ENCODE measurements at regions of chr12 and their contacts with region 1.

Region 1: GRCh38 chr12:102169922-102170621 is 27.6 kb downstream of the PMCH start:
- DNase-seq: peak; percentile 36
- ATAC-seq: peak; percentile 21
- H3K4me3 ChIP-seq: no peak overlapping the region
- H3K4me3 Mint-ChIP-seq: no peak overlapping the region
- H3K27ac ChIP-seq: no peak overlapping the region
- H3K27ac Mint-ChIP-seq: no peak overlapping the region
- H3K4me1 ChIP-seq: no peaks in the 10 kb centered on the region
- H3K4me1 Mint-ChIP-seq: no peaks in the 10 kb centered on the region
- H3K27me3 ChIP-seq: no peaks in the 10 kb centered on the region
- H3K27me3 Mint-ChIP-seq: no peaks in the 10 kb centered on the region
- CTCF ChIP-seq: peak; percentile 75

Region 2: GRCh38 chr12:102702447-102703114 is 532.5 kb after region 1 on chr12:
- CTCF ChIA-PET with region 1: interaction called, 6 read pairs
- POLR2A ChIA-PET with region 1: no interaction called
- intact Hi-C with region 1: loop called (anchors 2 kb)
- DNase-seq: peak; percentile 73
- ATAC-seq: peak; percentile 33
- H3K4me3 ChIP-seq: no peak overlapping the region
- H3K4me3 Mint-ChIP-seq: no peak overlapping the region
- H3K27ac ChIP-seq: no peak overlapping the region
- H3K27ac Mint-ChIP-seq: no peak overlapping the region
- H3K4me1 ChIP-seq: no peaks in the 10 kb centered on the region
- H3K4me1 Mint-ChIP-seq: no peaks in the 10 kb centered on the region
- H3K27me3 ChIP-seq: peaks cover 0 to 4% (median 0%) of the 10 kb centered on the region in 4 experiments
- H3K27me3 Mint-ChIP-seq: peaks cover 15% of the 10 kb centered on the region
- CTCF ChIP-seq: peak; percentile 79

Region 3: DNA sequence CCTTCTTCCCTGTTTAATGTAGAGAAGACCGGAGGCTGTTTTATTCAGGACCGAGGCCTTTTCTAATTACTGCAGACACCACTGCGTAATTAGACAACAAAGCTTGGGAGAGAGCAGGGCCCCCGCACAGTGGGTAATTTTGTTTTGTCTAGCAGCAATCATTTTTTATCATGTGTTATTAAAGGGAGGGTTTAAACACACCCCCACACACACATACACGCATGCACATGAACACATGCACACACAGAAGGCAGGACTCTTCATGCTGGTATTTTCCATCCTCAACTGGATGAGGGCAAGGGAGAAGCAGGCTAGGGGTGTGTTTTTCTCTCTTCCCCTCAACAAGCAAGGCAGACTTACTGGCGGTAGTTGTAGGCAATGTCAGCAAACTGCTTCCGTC is 696.2 kb after region 1 on chr12:
- CTCF ChIA-PET with region 1: no interaction called
- POLR2A ChIA-PET with region 1: no interaction called
- intact Hi-C with region 1: no loop called
- DNase-seq: no peak
- ATAC-seq: no peak
- H3K4me3 ChIP-seq: no peak overlapping the region
- H3K4me3 Mint-ChIP-seq: no peak overlapping the region
- H3K27ac ChIP-seq: no peak overlapping the region
- H3K27ac Mint-ChIP-seq: no peak overlapping the region
- H3K4me1 ChIP-seq: no peaks in the 10 kb centered on the region
- H3K4me1 Mint-ChIP-seq: no peaks in the 10 kb centered on the region
- H3K27me3 ChIP-seq: no peaks in the 10 kb centered on the region
- H3K27me3 Mint-ChIP-seq: no peaks in the 10 kb centered on the region
- CTCF ChIP-seq: no peak

Measured in B cell (primary cell).